SK-N-SH (cell line): ENCODE measurements at regions of chr9 and their contacts with region 1.

Region 1: DNA sequence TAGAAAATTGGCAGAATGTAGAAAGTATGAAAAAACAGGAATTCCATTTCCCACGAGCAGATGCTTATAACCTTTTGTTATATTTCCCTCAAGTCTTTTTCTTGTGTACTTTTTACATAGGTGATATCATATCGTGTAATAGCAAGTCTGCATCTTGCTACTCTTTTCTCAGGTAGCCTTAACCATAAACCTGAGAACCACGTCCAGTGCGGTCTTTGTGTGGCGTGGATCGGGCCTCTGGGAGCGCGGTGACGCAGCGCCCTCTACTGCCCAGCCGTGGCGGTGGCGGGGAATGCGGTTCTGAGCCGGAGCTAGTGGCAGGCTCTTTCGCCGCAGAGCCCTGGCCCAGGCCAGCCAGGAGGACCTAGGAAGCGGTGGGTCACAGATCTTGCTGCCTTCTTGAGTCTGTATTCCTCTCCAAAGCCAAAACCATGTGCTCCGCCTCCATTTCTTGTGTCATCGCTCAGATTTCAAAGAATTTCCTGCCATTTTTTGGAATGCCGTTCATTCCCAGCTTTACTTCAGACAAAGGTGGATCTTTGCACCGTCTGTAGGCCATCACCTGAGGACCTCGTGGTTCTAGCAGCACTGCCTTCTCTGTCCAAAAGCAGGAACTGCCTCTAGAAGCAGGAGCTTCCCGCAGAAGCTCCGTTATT is 71.9 kb downstream of the MVB12B start:
- DNase-seq: peak; percentile 91
- H3K4me3 ChIP-seq: peak overlapping the region in 1 of 2 experiments; percentile 51; a peak in 1 of 4 replicates
- H3K27ac ChIP-seq: no peak overlapping the region
- H3K4me1 ChIP-seq: peaks cover 3 to 5% of the 10 kb centered on the region in 2 experiments; a peak in 1 of 4 replicates
- H3K27me3 ChIP-seq: no peaks in the 10 kb centered on the region
- CTCF ChIP-seq: peak; percentile 99
- EP300 ChIP-seq: no peak
- RAD21 ChIP-seq: peak; percentile 98

Region 2: GRCh38 chr9:126228781-126229444 is 169.6 kb before region 1 on chr9:
- CTCF ChIA-PET with region 1: interaction called, 14 read pairs
- POLR2A ChIA-PET with region 1: no interaction called
- DNase-seq: peak; percentile 90
- H3K4me3 ChIP-seq: peak overlapping the region in 1 of 2 experiments; percentile 36; a peak in 1 of 4 replicates
- H3K27ac ChIP-seq: no peak overlapping the region
- H3K4me1 ChIP-seq: peaks cover 0 to 2% of the 10 kb centered on the region in 2 experiments; a peak in 1 of 4 replicates
- H3K27me3 ChIP-seq: no peaks in the 10 kb centered on the region
- CTCF ChIP-seq: peak; percentile 89
- EP300 ChIP-seq: no peak
- RAD21 ChIP-seq: peak; percentile 95

Region 3: DNA sequence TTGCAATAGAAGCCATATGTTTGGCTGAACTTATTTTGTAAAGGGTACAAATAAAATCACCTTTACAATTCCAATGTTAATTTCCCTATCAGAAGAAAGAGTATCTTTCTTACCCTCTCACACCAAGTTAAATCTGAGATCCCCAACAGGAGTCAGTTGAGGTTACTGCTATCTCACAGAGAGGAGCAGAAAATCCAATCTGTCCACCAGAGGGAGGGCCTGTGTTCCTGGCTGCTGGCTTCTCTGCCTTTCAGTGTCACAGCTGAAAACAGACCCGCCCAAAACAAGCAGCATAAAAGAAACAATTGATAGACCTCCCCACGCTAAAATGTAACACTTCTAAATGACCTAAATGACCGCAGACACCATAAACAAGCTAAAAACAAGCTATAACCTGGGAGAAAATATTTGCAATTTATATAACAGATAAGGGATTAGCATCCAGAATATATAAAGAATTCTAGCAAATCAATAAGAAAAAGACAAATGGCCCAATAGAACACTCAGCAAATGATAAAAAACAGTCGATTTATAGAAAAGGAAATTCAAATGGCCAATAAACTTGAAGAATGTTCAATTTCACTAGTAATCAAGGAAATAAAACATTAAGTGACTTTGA is 96.4 kb before region 1 on chr9:
- CTCF ChIA-PET with region 1: interaction called, 51 read pairs
- POLR2A ChIA-PET with region 1: no interaction called
- DNase-seq: peak; percentile 77
- H3K4me3 ChIP-seq: no peak overlapping the region
- H3K27ac ChIP-seq: no peak overlapping the region
- H3K4me1 ChIP-seq: no peaks in the 10 kb centered on the region; a peak in 1 of 4 replicates
- H3K27me3 ChIP-seq: no peaks in the 10 kb centered on the region
- CTCF ChIP-seq: peak; percentile 69
- EP300 ChIP-seq: no peak
- RAD21 ChIP-seq: peak; percentile 73

Region 4: GRCh38 chr9:126367616-126368015 is 30.9 kb before region 1 on chr9:
- CTCF ChIA-PET with region 1: interaction called, 12 read pairs
- POLR2A ChIA-PET with region 1: no interaction called
- DNase-seq: no peak
- H3K4me3 ChIP-seq: no peak overlapping the region
- H3K27ac ChIP-seq: no peak overlapping the region
- H3K4me1 ChIP-seq: peaks cover 0 to 5% of the 10 kb centered on the region in 2 experiments; a peak in 2 of 4 replicates
- H3K27me3 ChIP-seq: no peaks in the 10 kb centered on the region
- CTCF ChIP-seq: no peak
- EP300 ChIP-seq: no peak
- RAD21 ChIP-seq: no peak

Region 5: DNA sequence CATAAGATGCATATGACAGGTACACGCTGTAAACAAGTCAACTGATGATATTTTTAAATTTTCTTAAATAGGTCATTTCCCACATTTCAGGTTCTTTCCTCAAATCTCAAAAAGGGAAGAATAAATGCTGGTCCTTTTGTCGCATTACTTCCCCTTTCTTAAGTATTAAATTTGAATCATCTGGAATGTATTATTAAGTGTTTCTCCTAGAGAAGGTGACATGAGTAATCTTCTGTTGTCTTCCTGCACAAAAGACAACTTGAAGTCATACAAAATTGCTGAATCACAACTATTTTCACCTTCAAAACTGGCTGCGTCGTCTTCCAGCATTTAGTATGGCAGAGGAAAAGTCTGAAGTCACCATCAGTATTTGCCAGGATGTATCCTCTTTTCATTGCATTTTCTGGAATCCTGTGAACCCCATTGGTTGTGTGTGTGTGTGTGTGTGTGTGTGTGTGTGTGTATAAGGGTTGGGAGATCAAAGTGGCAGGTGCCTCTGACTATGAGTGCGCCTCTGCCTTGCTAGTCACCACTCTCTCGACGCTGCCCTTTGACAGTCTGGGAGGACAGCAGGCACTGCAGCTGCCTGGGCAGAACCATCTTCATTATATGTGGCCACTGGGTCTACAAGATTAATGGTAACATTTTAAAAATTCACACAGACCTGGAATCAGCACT is 15.0 kb after region 1 on chr9:
- CTCF ChIA-PET with region 1: interaction called, 38 read pairs
- POLR2A ChIA-PET with region 1: no interaction called
- DNase-seq: no peak
- H3K4me3 ChIP-seq: no peak overlapping the region
- H3K27ac ChIP-seq: no peak overlapping the region
- H3K4me1 ChIP-seq: no peaks in the 10 kb centered on the region
- H3K27me3 ChIP-seq: no peaks in the 10 kb centered on the region
- CTCF ChIP-seq: no peak
- EP300 ChIP-seq: no peak
- RAD21 ChIP-seq: no peak

Region 6: DNA sequence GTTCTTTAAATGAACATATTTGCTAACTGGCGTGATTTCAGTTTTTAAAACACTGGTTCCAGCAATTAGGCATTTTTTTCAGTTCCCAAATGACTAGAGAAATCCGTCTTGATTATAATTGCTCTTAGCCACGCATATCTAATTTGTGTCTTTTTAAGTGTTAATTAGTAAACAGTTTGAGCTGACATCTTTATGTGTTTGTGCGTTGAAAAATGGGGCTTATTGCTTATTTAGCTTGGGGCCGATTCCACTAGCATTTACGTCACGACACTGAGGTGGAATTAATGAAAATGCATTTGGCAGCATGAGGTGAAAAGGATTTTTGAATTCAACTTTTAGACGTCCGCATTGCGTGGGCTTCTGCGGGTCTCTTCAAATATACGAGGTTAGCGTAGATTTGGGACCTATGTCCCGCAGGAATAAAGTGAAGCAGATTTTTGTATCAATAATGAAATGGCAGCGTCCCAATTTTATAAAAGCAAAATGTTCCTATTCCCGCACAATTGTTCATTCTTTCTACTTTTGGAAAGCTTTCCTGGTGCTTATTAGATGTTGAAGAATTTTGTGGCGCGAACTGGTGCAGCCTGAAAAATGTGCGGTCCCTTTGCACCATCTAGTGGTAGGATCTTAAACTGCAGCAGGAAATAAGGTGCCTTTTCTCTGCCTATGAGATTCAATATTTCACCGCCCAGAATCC is 92.5 kb after region 1 on chr9:
- CTCF ChIA-PET with region 1: interaction called, 69 read pairs
- POLR2A ChIA-PET with region 1: no interaction called
- DNase-seq: peak; percentile 69
- H3K4me3 ChIP-seq: no peak overlapping the region
- H3K27ac ChIP-seq: no peak overlapping the region
- H3K4me1 ChIP-seq: no peaks in the 10 kb centered on the region
- H3K27me3 ChIP-seq: no peaks in the 10 kb centered on the region
- CTCF ChIP-seq: peak; percentile 96
- EP300 ChIP-seq: no peak
- RAD21 ChIP-seq: peak; percentile 93